ENCODE measurements at regions of chr18 and their contacts with region 1.

Region 1: GRCh38 chr18:63823518-63824219 is 48.5 kb downstream of the SERPINB7 start:
- DNase-seq: peak in 1 of 2 donors; percentile 44
- ATAC-seq: no peak
- H3K4me3 ChIP-seq: no peak overlapping the region
- H3K4me3 Mint-ChIP-seq: no peak overlapping the region
- H3K27ac ChIP-seq: no peak overlapping the region
- H3K27ac Mint-ChIP-seq: no peak overlapping the region
- H3K4me1 ChIP-seq: no peaks in the 10 kb centered on the region
- H3K4me1 Mint-ChIP-seq: no peaks in the 10 kb centered on the region
- H3K27me3 ChIP-seq: no peaks in the 10 kb centered on the region
- H3K27me3 Mint-ChIP-seq: peaks cover 0 to 9% of the 10 kb centered on the region in 2 donors
- CTCF ChIP-seq: peak; percentile 21

Region 2: GRCh38 chr18:63664571-63664970 is 159.1 kb before region 1 on chr18:
- intact Hi-C with region 1: no loop called
- DNase-seq: no peak
- ATAC-seq: no peak
- H3K4me3 ChIP-seq: no peak overlapping the region
- H3K4me3 Mint-ChIP-seq: no peak overlapping the region
- H3K27ac ChIP-seq: no peak overlapping the region
- H3K27ac Mint-ChIP-seq: no peak overlapping the region
- H3K4me1 ChIP-seq: no peaks in the 10 kb centered on the region
- H3K4me1 Mint-ChIP-seq: no peaks in the 10 kb centered on the region
- H3K27me3 ChIP-seq: no peaks in the 10 kb centered on the region
- H3K27me3 Mint-ChIP-seq: peaks cover 0 to 1% of the 10 kb centered on the region in 2 donors
- CTCF ChIP-seq: no peak

Region 3: GRCh38 chr18:63969960-63970802 is 146.5 kb after region 1 on chr18 and contains the start of gene SERPINB8:
- intact Hi-C with region 1: loop called (anchors 10 kb)
- DNase-seq: peak; percentile 63 to 87
- ATAC-seq: peak; percentile 82 to 83 (median 83)
- H3K4me3 ChIP-seq: peak within 1 kb of the TSS; percentile 55
- H3K4me3 Mint-ChIP-seq: peak within 1 kb of the TSS; percentile 96
- H3K27ac ChIP-seq: peak within 1 kb of the TSS; percentile 67
- H3K27ac Mint-ChIP-seq: peak within 1 kb of the TSS; percentile 74 to 99
- H3K4me1 ChIP-seq: peaks cover 16% of the 10 kb centered on the region
- H3K4me1 Mint-ChIP-seq: peaks cover 29 to 40% of the 10 kb centered on the region in 2 donors
- H3K27me3 ChIP-seq: no peaks in the 10 kb centered on the region
- H3K27me3 Mint-ChIP-seq: peaks cover 7 to 16% of the 10 kb centered on the region in 2 donors
- CTCF ChIP-seq: no peak
- total RNA-seq, gene SERPINB8: 4.9 to 12.9 (median 12.8) TPM

Measured in natural killer cell (primary cell).